Activated CD4-positive, alpha-beta T cell treated with anti-CD3 and anti-CD28 coated beads, Interleukin-2, amount 10 ng/mL, durations not matched to agents 7 days and 5 days (primary cell): ENCODE measurements at regions of chr15 and their contacts with region 1.

Region 1: GRCh38 chr15:56918046-56918938 is at the start of gene TCF12:
- DNase-seq: peak; percentile 85
- H3K4me3 Mint-ChIP-seq: peak within 1 kb of the TSS; percentile 88
- H3K27ac Mint-ChIP-seq: peak within 1 kb of the TSS; percentile 88
- H3K4me1 Mint-ChIP-seq: peaks cover 34% of the 10 kb centered on the region
- H3K27me3 Mint-ChIP-seq: no peaks in the 10 kb centered on the region
- total RNA-seq, gene TCF12: 50.9 to 60.8 TPM

Region 2: DNA sequence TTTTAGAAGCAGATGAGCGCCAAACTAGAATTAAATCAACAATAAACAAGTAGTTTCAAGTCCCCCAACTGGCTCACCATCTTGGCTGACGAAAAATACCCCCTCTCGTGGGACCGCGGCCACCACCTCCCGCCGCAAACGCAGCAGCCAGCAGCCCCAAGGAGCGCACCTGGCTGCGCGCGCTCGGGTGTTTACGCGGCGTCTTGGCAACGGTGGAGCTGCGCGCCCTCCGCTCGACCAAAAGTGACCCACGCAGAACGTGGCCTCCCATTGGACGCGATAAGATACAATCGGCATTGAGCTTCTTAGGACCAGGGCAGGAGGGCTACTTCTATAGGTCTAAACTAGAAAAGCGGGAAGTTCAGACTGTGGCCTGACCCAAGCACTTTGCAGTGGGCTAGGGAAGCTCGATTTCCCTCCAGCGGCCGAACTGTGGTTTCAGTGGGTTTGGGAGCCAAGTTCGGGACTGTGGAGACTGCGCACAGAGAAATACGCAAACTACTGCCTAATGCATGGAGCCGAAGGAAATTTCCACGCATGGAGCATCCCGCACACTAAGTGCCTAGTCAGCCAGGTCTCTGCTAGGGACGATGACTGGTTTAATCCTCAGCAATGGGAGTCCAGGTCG is 453.3 kb before region 1 on chr15 and contains the start of gene MNS1:
- CTCF ChIA-PET with region 1: no interaction called
- POLR2A ChIA-PET with region 1: no interaction called
- DNase-seq: peak; percentile 87
- H3K4me3 Mint-ChIP-seq: peak within 1 kb of the TSS; percentile 85
- H3K27ac Mint-ChIP-seq: peak within 1 kb of the TSS; percentile 57
- H3K4me1 Mint-ChIP-seq: peaks cover 32% of the 10 kb centered on the region
- H3K27me3 Mint-ChIP-seq: peaks cover 23% of the 10 kb centered on the region
- total RNA-seq, gene MNS1: 0.23 to 0.79 TPM

Region 3: GRCh38 chr15:56929399-56929798 is 11.1 kb after region 1 on chr15:
- CTCF ChIA-PET with region 1: interaction called, 10 read pairs
- POLR2A ChIA-PET with region 1: interaction called, 6 read pairs
- DNase-seq: no peak
- H3K4me3 Mint-ChIP-seq: no peak overlapping the region
- H3K27ac Mint-ChIP-seq: no peak overlapping the region
- H3K4me1 Mint-ChIP-seq: peaks cover 30% of the 10 kb centered on the region
- H3K27me3 Mint-ChIP-seq: no peaks in the 10 kb centered on the region